CD4-positive, alpha-beta memory T cell (primary cell): ENCODE measurements at regions of chr11 and their contacts with region 1.

Region 1: GRCh38 chr11:130314750-130315285 is at the start of gene ZBTB44:
- DNase-seq: peak; percentile 87 to 93 (median 88)
- H3K4me3 ChIP-seq: peak within 1 kb of the TSS; percentile 54 to 67
- H3K4me3 Mint-ChIP-seq: peak within 1 kb of the TSS; percentile 89 to 100 (median 98)
- H3K27ac ChIP-seq: peak within 1 kb of the TSS; percentile 72
- H3K27ac Mint-ChIP-seq: peak within 1 kb of the TSS; percentile 95 to 99 (median 98)
- H3K4me1 ChIP-seq: peaks cover 42% of the 10 kb centered on the region
- H3K4me1 Mint-ChIP-seq: peaks cover 24 to 59% (median 32%) of the 10 kb centered on the region in 4 donors
- H3K27me3 ChIP-seq: no peaks in the 10 kb centered on the region
- H3K27me3 Mint-ChIP-seq: no peaks in the 10 kb centered on the region
- total RNA-seq, gene ZBTB44: 73.0 to 76.2 TPM

Region 2: DNA sequence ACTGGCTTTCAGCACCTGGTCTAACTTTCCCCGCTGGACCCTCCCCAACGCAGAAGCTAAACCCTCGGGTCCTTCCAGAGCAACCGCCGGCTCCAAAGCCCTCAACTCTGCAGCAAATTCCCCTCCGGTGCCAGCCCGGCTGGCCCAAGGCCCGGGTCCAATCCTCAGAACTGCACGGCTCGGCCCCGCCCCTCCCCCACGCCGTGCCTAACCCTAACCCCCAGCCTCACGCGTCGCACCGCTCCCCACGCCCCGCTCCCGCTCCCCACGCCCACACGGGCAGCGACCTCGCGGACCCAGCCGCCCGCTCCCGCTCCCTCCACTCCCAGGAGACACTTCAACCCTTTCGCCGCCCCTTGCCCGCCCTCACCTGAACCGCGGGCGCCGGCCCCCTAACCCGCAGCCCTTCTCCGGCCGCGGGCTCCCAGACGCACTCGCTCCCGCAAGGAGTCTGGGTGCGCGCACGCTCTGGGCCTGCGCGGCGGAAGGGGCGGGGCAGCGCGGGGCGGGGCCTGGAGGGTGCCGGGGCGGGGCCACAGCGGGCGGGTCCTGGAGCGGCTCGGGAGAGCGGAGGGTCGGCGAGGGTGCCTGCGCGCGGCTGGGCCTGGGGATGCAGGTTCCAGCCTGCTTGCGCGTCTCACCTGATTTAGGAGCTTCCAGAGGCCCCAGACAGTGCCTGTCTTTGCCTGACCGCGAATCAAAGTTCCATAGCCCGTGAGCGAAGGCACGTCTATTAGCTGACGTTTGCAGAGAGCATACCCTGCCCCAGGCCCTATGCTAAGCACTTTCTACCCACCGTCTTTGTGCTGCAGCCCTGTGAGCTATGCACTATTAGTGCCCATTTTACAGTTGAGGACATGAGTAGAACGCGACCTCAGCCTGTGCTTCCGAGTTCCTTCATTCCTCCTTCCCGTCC is 419.4 kb before region 1 on chr11 and contains the start of gene NFRKB:
- CTCF ChIA-PET with region 1: no interaction called
- POLR2A ChIA-PET with region 1: no interaction called
- intact Hi-C with region 1: loop called (anchors 1 kb)
- DNase-seq: peak; percentile 81 to 89 (median 84)
- H3K4me3 ChIP-seq: peak within 1 kb of the TSS; percentile 61 to 84
- H3K4me3 Mint-ChIP-seq: peak within 1 kb of the TSS; percentile 92 to 94 (median 94)
- H3K27ac ChIP-seq: peak within 1 kb of the TSS; percentile 81
- H3K27ac Mint-ChIP-seq: peak within 1 kb of the TSS; percentile 82 to 93 (median 90)
- H3K4me1 ChIP-seq: peaks cover 29% of the 10 kb centered on the region
- H3K4me1 Mint-ChIP-seq: peaks cover 20 to 51% (median 33%) of the 10 kb centered on the region in 4 donors
- H3K27me3 ChIP-seq: no peaks in the 10 kb centered on the region
- H3K27me3 Mint-ChIP-seq: no peaks in the 10 kb centered on the region
- total RNA-seq, gene NFRKB: 91.9 to 94.9 TPM

Region 3: GRCh38 chr11:130213143-130213978 is 101.5 kb before region 1 on chr11:
- CTCF ChIA-PET with region 1: no interaction called
- POLR2A ChIA-PET with region 1: no interaction called
- intact Hi-C with region 1: loop called (anchors 1 kb)
- DNase-seq: peak; percentile 47 to 69 (median 63)
- H3K4me3 ChIP-seq: no peak overlapping the region
- H3K4me3 Mint-ChIP-seq: no peak overlapping the region
- H3K27ac ChIP-seq: no peak overlapping the region
- H3K27ac Mint-ChIP-seq: no peak overlapping the region
- H3K4me1 ChIP-seq: peaks cover 7% of the 10 kb centered on the region
- H3K4me1 Mint-ChIP-seq: no peaks in the 10 kb centered on the region
- H3K27me3 ChIP-seq: no peaks in the 10 kb centered on the region
- H3K27me3 Mint-ChIP-seq: peaks cover 4 to 9% of the 10 kb centered on the region in 2 donors

Region 4: GRCh38 chr11:130390071-130390758 is 75.4 kb after region 1 on chr11:
- CTCF ChIA-PET with region 1: no interaction called
- POLR2A ChIA-PET with region 1: no interaction called
- intact Hi-C with region 1: loop called (anchors 1 kb)
- DNase-seq: no peak
- H3K4me3 ChIP-seq: no peak overlapping the region
- H3K4me3 Mint-ChIP-seq: peak overlapping the region in 1 of 8 donors; percentile 10
- H3K27ac ChIP-seq: no peak overlapping the region
- H3K27ac Mint-ChIP-seq: peak overlapping the region in 3 of 7 donors; percentile 31 to 50 (median 46)
- H3K4me1 ChIP-seq: peaks cover 17% of the 10 kb centered on the region
- H3K4me1 Mint-ChIP-seq: peaks cover 14 to 31% (median 25%) of the 10 kb centered on the region in 4 donors
- H3K27me3 ChIP-seq: no peaks in the 10 kb centered on the region
- H3K27me3 Mint-ChIP-seq: no peaks in the 10 kb centered on the region

Region 5: GRCh38 chr11:130916238-130916855 is 601.5 kb after region 1 on chr11 and contains the start of gene SNX19:
- CTCF ChIA-PET with region 1: no interaction called
- POLR2A ChIA-PET with region 1: no interaction called
- intact Hi-C with region 1: loop called (anchors 1 kb)
- DNase-seq: peak; percentile 88 to 91 (median 90)
- H3K4me3 ChIP-seq: peak within 1 kb of the TSS; percentile 66 to 74
- H3K4me3 Mint-ChIP-seq: peak within 1 kb of the TSS; percentile 88 to 92 (median 90)
- H3K27ac ChIP-seq: peak within 1 kb of the TSS; percentile 95
- H3K27ac Mint-ChIP-seq: peak within 1 kb of the TSS; percentile 92 to 95 (median 93)
- H3K4me1 ChIP-seq: peaks cover 41% of the 10 kb centered on the region
- H3K4me1 Mint-ChIP-seq: peaks cover 18 to 57% (median 33%) of the 10 kb centered on the region in 4 donors
- H3K27me3 ChIP-seq: no peaks in the 10 kb centered on the region
- H3K27me3 Mint-ChIP-seq: peaks cover 5% of the 10 kb centered on the region in 2 donors
- total RNA-seq, gene SNX19: 84.1 to 94.2 TPM